CD8-positive, alpha-beta T cell (primary cell): ENCODE measurements at regions of chr2 and their contacts with region 1.

Region 1: DNA sequence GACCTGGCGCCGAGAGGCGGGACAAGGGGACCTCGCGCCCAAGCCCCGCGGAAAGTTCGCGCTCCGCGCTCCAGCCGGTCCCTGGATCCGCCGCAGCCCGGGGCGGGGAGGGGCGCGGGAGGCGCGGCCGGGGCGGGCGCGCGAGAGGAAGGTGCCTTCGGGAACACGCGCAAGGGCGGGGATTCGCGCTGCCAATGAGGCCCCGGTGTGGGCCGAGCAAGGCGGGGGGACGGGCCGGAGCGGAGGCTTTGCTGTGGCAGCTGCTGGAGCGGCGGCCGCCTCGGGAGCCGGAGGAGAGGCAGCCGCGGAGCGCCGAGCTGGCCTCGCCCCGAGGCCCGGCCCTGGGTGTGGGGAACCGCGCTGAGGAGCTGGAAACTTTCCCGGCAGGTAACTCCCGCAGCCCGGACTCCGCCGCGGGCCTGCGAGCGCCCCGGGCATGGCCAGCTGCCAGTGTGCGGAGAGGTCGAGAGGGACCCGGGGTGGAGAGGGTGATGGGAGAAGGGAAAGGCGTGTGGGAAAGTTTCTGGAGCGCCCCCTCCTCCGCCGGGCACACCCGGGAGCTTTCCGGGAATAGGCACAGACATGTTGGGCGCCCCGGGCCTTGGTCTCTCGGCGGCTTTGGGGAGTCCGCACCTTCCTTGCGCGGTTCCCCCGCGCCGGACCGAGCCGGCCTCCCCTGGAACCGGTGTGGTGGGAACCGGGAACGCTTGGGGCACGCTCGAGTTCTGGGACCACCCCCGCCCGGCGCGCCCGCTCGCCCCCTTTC is at the start of gene TANC1:
- DNase-seq: peak in 7 of 9 experiments; percentile 7 to 55 (median 39)
- ATAC-seq: peak; percentile 81
- H3K4me3 ChIP-seq: peak within 1 kb of the TSS; percentile 39 to 50
- H3K4me3 Mint-ChIP-seq: peak within 1 kb of the TSS; percentile 79
- H3K27ac ChIP-seq: no peak within 1 kb of the TSS
- H3K27ac Mint-ChIP-seq: no peak within 1 kb of the TSS
- H3K4me1 ChIP-seq: peaks cover 16% of the 10 kb centered on the region
- H3K4me1 Mint-ChIP-seq: peaks cover 16% of the 10 kb centered on the region
- H3K27me3 ChIP-seq: peaks cover 2 to 3% of the 10 kb centered on the region in 2 experiments
- H3K27me3 Mint-ChIP-seq: peaks cover 29% of the 10 kb centered on the region
- CTCF ChIP-seq: no peak
- total RNA-seq, gene TANC1: 0.19 to 0.24 TPM

Region 2: DNA sequence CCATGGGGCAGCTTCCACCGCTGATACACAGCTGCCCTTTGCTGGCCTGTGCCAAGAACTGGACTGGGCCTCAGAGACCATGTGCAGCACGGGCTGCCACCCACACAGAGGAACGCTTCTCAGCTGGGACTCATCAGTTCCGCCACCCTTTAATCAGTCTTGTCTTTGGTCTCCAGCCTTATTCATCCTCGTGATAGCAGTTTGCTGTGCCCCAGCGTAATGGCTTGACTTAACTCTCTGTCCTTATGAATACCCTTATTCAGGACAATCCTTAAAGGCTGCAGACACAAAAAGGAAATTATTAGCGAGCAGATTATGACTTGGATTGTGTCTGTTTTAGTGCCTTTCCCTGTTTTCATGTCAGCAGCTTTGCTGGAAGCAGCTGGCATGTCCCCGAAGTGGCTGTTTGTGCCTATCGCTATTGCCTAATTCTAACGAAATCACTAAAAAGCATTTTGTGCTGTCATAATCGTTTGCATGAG is 282.3 kb before region 1 on chr2:
- CTCF ChIA-PET with region 1: no interaction called
- POLR2A ChIA-PET with region 1: no interaction called
- intact Hi-C with region 1: no loop called
- DNase-seq: no peak
- ATAC-seq: no peak
- H3K4me3 ChIP-seq: no peak overlapping the region
- H3K4me3 Mint-ChIP-seq: no peak overlapping the region
- H3K27ac ChIP-seq: no peak overlapping the region
- H3K27ac Mint-ChIP-seq: no peak overlapping the region
- H3K4me1 ChIP-seq: no peaks in the 10 kb centered on the region
- H3K4me1 Mint-ChIP-seq: no peaks in the 10 kb centered on the region
- H3K27me3 ChIP-seq: no peaks in the 10 kb centered on the region
- H3K27me3 Mint-ChIP-seq: no peaks in the 10 kb centered on the region
- CTCF ChIP-seq: no peak

Region 3: GRCh38 chr2:159017837-159018236 is 49.3 kb after region 1 on chr2:
- CTCF ChIA-PET with region 1: no interaction called
- POLR2A ChIA-PET with region 1: no interaction called
- intact Hi-C with region 1: loop called in 1 of 2 experiments (anchors 1 kb)
- DNase-seq: no peak
- ATAC-seq: no peak
- H3K4me3 ChIP-seq: no peak overlapping the region
- H3K4me3 Mint-ChIP-seq: no peak overlapping the region
- H3K27ac ChIP-seq: no peak overlapping the region
- H3K27ac Mint-ChIP-seq: no peak overlapping the region
- H3K4me1 ChIP-seq: no peaks in the 10 kb centered on the region
- H3K4me1 Mint-ChIP-seq: no peaks in the 10 kb centered on the region
- H3K27me3 ChIP-seq: no peaks in the 10 kb centered on the region
- H3K27me3 Mint-ChIP-seq: no peaks in the 10 kb centered on the region
- CTCF ChIP-seq: no peak